Common myeloid progenitor, CD34-positive (primary cell): ENCODE measurements at regions of chr1 and their contacts with region 1.

Region 1: DNA sequence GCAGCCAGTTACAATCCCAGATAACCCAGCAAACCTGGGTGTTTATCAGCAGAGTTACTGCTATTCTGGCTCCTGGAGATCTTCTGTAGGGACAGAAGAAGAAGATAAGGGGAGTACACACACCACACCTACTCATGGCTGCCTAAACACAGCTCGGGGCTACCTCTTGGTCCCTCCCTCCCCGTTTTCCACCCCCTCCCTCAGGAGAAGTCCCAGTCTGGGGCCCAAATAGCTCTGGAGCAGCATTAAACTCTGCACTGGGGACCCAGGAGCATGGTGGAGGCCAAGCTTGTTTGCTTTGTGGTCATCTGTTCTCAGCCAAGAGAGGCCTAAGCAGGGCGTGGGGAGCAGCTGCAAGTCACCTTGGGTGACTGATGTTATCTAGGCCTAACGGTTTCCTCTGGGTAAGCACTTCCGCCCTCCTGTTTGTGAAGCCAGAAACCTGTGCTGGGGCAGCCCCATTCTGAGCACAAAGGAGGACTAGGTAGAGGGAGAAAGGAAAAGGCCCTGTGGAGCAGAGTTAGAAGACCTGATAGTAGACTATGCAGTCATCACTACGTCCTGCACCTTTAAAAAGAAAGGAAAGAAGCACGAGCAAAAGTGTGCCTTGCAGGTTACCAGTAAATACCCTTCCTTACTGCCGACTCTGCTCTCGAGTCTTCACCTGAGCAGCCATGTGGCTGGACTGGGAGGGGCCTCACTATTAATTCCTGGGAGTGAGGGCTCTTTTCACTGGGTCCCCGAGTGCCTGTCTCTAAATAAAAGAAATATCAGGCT is 2.0 kb upstream of the RCSD1 start:
- DNase-seq: peak; percentile 87 to 98 (median 96)
- H3K4me3 ChIP-seq: peak overlapping the region in 5 of 7 experiments; percentile 30 to 93 (median 75)
- H3K27ac ChIP-seq: peak overlapping the region; percentile 90 to 96
- H3K4me1 ChIP-seq: peaks cover 45 to 76% (median 66%) of the 10 kb centered on the region in 4 experiments
- H3K27me3 ChIP-seq: no peaks in the 10 kb centered on the region

Region 2: DNA sequence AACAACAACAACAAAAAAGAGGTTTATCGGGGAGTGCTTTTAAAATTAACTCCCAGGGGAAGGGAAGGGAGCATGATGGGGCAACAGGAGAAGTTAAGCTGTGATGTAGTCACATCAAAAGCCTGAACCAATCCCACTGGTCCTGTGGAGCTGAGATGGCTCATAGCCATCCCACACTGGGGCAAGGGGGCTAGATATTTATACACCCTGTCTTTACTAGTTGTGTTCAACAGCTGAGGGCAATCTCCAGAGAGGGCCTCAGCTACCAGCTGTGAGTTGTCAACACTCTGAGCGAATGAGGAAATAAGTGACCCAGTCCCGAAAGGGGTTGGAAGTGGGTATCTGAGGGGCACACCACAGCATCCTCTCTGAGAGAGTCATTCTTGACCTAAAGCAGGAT is 43.5 kb before region 1 on chr1:
- CTCF ChIA-PET with region 1: no interaction called
- POLR2A ChIA-PET with region 1: no interaction called
- DNase-seq: no peak
- H3K4me3 ChIP-seq: no peak overlapping the region
- H3K27ac ChIP-seq: no peak overlapping the region
- H3K4me1 ChIP-seq: peaks cover 0 to 8% (median 0%) of the 10 kb centered on the region in 4 experiments
- H3K27me3 ChIP-seq: no peaks in the 10 kb centered on the region

Region 3: GRCh38 chr1:167617153-167618147 is 10.6 kb before region 1 on chr1:
- CTCF ChIA-PET with region 1: interaction called, 25 read pairs
- POLR2A ChIA-PET with region 1: interaction called, 8 read pairs
- DNase-seq: peak; percentile 56 to 83 (median 74)
- H3K4me3 ChIP-seq: peak overlapping the region in 6 of 7 experiments; percentile 37 to 67 (median 50)
- H3K27ac ChIP-seq: peak overlapping the region; percentile 33 to 70
- H3K4me1 ChIP-seq: peaks cover 25 to 44% (median 34%) of the 10 kb centered on the region in 4 experiments
- H3K27me3 ChIP-seq: no peaks in the 10 kb centered on the region

Region 4: DNA sequence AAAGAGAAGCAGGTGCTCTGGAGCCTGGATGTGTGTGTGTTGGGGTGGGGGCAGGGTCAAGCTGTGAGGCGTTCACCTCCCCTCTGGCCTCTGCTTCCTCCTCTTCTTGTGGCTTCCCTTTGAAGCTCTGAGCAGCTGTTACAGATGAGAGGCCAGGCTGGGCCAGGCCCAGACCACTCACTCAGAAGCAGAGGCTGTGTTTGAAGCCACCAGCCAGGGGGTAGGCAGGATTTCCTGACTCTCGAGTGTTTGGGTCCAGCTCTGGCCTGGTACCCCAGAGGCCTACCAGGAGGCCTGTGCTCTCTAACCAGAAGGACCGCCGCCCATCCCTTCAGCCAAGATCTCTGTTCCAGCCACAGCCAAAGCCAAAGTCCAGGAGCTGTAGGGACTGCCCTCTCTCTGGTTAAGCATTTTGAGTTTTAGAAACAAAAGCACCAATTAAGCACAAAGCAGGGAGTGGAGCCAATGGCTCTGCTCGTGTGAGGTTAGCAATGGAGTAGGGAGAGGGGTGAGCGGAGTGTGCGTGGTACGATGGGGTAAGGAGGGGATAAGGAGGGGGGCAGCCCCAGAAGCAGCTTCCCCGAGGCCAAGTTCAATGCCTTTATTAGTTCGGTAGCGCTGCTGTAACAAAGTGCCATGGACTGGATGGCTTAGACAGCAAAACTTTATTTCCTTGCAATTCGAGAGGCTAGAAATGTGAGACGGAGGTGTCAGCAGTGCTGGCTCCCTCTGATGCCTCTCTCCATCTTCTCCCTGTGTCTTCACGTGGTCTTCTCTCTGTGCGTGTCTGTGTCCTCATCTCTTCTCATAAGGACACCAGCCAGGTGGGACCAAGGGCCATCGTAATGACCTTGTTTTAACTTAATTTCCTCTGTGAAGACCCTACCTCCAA is 22.5 kb after region 1 on chr1:
- CTCF ChIA-PET with region 1: interaction called, 99 read pairs
- POLR2A ChIA-PET with region 1: interaction called, 3 read pairs
- DNase-seq: peak in 2 of 3 donors; percentile 81 to 86
- H3K4me3 ChIP-seq: peak overlapping the region in 2 of 7 experiments; percentile 14 to 29
- H3K27ac ChIP-seq: peak overlapping the region; percentile 68 to 77
- H3K4me1 ChIP-seq: peaks cover 49 to 94% (median 82%) of the 10 kb centered on the region in 4 experiments
- H3K27me3 ChIP-seq: no peaks in the 10 kb centered on the region